ENCODE measurements at regions of chr6 and their contacts with region 1.

Region 1: DNA sequence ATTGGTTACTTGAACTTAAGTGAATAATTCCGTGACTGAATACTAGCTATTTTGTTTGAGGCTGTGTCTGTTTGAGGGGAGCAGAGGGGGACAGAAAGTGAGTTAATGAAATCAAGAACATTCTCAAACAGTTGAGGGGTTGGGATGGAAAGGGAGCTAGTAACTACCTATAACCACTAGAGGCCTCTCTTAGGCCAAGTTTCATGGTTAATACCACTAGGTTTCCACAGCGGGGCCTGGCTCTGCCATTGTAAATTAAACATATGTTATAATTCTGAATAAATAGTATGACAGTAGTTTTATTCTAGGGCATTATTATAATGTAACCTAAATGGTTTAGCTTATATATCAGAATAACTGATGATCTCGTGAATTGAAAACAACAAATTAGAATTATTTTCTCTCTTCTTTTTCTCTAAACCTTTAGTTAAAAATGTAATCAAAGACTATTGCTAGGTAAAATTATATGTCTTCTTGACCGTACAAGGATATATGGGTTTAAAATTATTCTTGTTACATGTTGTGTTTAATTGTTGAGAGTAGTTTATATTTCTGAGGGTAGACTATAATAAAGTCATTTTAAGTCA is 108.1 kb downstream of the BCKDHB start:
- H3K4me3 ChIP-seq: no peak overlapping the region
- H3K27ac ChIP-seq: no peak overlapping the region
- H3K4me1 ChIP-seq: no peaks in the 10 kb centered on the region
- CTCF ChIP-seq: 0 out of 2 replicates have a peak, but pooled peaks have one; percentile 24

Region 2: GRCh38 chr6:80446454-80447045 is 232.0 kb after region 1 on chr6:
- CTCF ChIA-PET with region 1: no interaction called
- POLR2A ChIA-PET with region 1: no interaction called
- H3K4me3 ChIP-seq: no peak overlapping the region
- H3K27ac ChIP-seq: no peak overlapping the region
- H3K4me1 ChIP-seq: no peaks in the 10 kb centered on the region
- CTCF ChIP-seq: no peak

Region 3: DNA sequence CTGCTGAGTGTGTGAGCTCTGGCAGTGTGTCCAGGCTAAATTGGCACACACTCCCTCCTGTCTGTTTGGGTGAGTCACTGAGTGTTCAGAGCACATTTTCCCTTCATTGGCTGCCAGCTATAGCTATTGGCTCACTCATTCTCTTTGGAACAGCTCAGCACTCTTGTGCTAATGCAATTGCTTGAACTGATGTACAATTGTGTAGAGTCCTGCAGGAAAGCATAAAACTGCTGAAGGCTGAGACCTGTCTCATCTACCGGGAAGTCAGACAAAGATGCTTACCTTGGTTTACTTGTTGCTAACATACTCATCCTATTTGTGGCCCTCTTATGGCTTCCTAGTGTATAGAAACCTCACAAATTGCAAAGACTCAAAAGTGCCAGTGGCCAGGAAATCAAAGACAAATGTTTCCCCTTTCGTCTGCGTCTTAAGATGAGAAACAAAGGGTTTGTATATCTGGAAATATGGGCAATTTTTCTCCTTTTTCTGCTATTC is 243.0 kb after region 1 on chr6:
- CTCF ChIA-PET with region 1: interaction called, 11 read pairs
- POLR2A ChIA-PET with region 1: no interaction called
- H3K4me3 ChIP-seq: no peak overlapping the region
- H3K27ac ChIP-seq: no peak overlapping the region
- H3K4me1 ChIP-seq: peaks cover 4% of the 10 kb centered on the region; the same call in 1 of the 2 replicates
- CTCF ChIP-seq: no peak

Measured in HEK293 (cell line).